ENCODE measurements at regions of chr17 and their contacts with region 1.

Region 1: GRCh38 chr17:44575403-44575802 is 18.1 kb downstream of the FZD2 start:
- DNase-seq: no peak
- H3K4me3 ChIP-seq: no peak overlapping the region
- H3K27ac ChIP-seq: no peak overlapping the region
- H3K4me1 ChIP-seq: no peaks in the 10 kb centered on the region
- H3K27me3 ChIP-seq: no peaks in the 10 kb centered on the region
- CTCF ChIP-seq: no peak

Region 2: DNA sequence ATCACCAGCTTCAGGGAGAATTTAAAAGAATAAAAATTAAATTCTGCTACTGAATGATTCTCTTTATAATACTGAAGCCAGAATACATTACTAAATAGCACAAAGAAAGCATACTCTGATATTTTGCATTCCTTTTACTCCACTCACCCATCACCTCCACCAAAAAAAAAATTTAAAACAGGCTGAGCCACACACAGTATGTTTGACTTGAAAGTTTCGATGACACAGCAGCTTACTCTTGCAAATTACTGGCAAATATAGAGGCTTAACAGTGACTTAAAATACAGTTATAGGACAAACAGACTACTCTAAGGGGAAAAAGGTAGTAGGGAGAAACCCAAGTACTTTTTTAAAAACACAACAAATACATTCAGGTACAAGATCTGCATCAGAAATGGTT is 111.4 kb before region 1 on chr17:
- CTCF ChIA-PET with region 1: no interaction called
- POLR2A ChIA-PET with region 1: interaction called, 37 read pairs
- intact Hi-C with region 1: no loop called
- DNase-seq: no peak
- H3K4me3 ChIP-seq: no peak overlapping the region
- H3K27ac ChIP-seq: peak overlapping the region; percentile 27; the same call in 1 of the 2 replicates
- H3K4me1 ChIP-seq: no peaks in the 10 kb centered on the region
- H3K27me3 ChIP-seq: no peaks in the 10 kb centered on the region
- CTCF ChIP-seq: no peak

Region 3: GRCh38 chr17:44606658-44607057 is 31.3 kb after region 1 on chr17:
- CTCF ChIA-PET with region 1: no interaction called
- POLR2A ChIA-PET with region 1: no interaction called
- intact Hi-C with region 1: no loop called
- DNase-seq: no peak
- H3K4me3 ChIP-seq: no peak overlapping the region
- H3K27ac ChIP-seq: no peak overlapping the region
- H3K4me1 ChIP-seq: no peaks in the 10 kb centered on the region
- H3K27me3 ChIP-seq: no peaks in the 10 kb centered on the region
- CTCF ChIP-seq: no peak

Region 4: GRCh38 chr17:44636562-44636961 is 61.2 kb after region 1 on chr17:
- CTCF ChIA-PET with region 1: no interaction called
- POLR2A ChIA-PET with region 1: no interaction called
- intact Hi-C with region 1: loop called (anchors 5 kb)
- DNase-seq: peak in 1 of 2 experiments; percentile 64
- H3K4me3 ChIP-seq: no peak overlapping the region
- H3K27ac ChIP-seq: no peak overlapping the region
- H3K4me1 ChIP-seq: no peaks in the 10 kb centered on the region
- H3K27me3 ChIP-seq: no peaks in the 10 kb centered on the region
- CTCF ChIP-seq: peak; percentile 76